Heart right ventricle (tissue), 16 donors: ENCODE measurements at regions of chr12 and their contacts with region 1.

Region 1: GRCh38 chr12:14479004-14479403 is 88.7 kb downstream of the PLBD1 start:
- DNase-seq: no peak
- ATAC-seq: no peak
- H3K4me3 ChIP-seq: no peak overlapping the region
- H3K27ac ChIP-seq: no peak overlapping the region
- H3K4me1 ChIP-seq: no peaks in the 10 kb centered on the region
- H3K27me3 ChIP-seq: no peaks in the 10 kb centered on the region
- CTCF ChIP-seq: no peak

Region 2: DNA sequence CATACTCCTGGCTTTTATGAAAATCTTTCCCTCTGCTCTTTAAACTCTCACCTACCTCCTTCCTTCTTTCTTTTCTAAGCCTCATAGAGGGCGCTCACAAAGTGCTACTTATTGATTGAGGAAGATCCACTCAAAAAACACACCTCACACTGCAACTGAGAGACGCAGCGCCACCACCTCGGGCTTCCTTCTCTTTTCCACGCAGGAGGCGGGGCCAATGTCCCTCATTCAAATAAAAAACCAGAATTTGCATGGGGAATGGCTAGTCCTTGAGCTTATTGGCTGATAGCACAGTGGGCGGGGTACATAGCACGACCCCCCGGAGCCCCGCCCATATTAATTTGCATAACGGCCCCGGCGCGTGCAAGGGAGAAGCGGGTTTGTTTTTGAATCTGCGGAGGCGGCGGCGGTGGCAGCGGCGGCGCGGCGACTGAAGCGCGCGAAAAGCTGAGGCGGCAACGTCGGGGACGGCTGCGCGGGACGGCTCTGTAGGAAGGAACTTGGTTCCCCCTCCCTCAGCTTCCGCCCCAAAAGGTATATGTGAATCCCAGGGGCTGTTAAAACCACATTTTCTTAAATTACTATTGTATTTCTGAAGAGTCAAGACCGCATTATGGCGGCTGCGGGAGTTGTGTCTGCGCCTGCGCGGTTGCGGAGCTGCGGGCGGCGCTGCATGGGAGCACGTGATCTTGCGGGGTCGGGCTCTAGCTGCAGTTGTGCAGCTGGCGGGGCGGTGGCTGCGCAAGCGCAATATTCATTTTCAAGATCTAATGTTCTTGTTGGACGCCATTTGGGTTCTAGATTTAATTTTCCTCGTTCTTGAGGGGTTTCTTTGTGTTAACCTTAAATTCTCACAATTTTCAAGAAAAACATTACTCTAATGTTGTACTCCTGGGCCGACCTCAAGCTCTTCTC is 113.5 kb before region 1 on chr12 and contains the start of gene ATF7IP:
- intact Hi-C with region 1: no loop called
- DNase-seq: peak; percentile 94 to 97
- ATAC-seq: peak; percentile 97 to 99 (median 98)
- H3K4me3 ChIP-seq: peak within 1 kb of the TSS; percentile 26 to 83 (median 72)
- H3K27ac ChIP-seq: peak within 1 kb of the TSS; percentile 82 to 99 (median 96)
- H3K4me1 ChIP-seq: peaks cover 0 to 24% (median 8%) of the 10 kb centered on the region in 9 donors
- H3K27me3 ChIP-seq: no peaks in the 10 kb centered on the region
- CTCF ChIP-seq: peak in 4 of 9 donors; percentile 36 to 61 (median 56)
- total RNA-seq, gene ATF7IP: 37.9 to 85.8 (median 67.3) TPM

Region 3: DNA sequence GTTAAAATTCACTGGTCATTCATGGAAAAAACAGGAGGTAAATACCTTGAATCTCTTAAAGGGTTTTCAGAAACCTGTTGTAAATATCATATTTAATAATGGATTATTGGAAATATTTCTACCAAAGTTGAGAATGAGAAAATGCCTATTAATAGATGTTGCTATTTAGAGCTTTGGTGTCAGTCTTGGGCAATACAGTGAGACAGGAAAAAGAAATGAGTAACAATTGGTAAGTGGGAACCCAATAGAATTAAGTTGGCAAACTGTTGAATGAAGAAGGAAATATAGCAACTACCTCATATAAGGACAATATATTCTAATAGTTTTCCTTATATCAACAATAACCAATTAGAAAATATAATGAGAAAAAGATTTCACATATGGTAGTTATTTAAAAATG is 35.5 kb before region 1 on chr12:
- intact Hi-C with region 1: loop called in 1 of 10 experiments (anchors 2 kb)
- DNase-seq: no peak
- ATAC-seq: peak in 6 of 8 donors; percentile 64 to 90 (median 80)
- H3K4me3 ChIP-seq: no peak overlapping the region
- H3K27ac ChIP-seq: peak overlapping the region in 9 of 10 donors; percentile 33 to 71 (median 60)
- H3K4me1 ChIP-seq: peaks cover 0 to 29% (median 22%) of the 10 kb centered on the region in 9 donors
- H3K27me3 ChIP-seq: no peaks in the 10 kb centered on the region
- CTCF ChIP-seq: no peak